Activated CD4-positive, alpha-beta T cell treated with anti-CD3 and anti-CD28 coated beads for 36 hours (primary cell): ENCODE measurements at regions of chr15 and their contacts with region 1.

Region 1: GRCh38 chr15:64247906-64248541 is 85.2 kb upstream of the PPIB start:
- DNase-seq: peak; percentile 34
- ATAC-seq: peak; percentile 55
- H3K4me3 Mint-ChIP-seq: no peak overlapping the region
- H3K27ac Mint-ChIP-seq: no peak overlapping the region
- H3K4me1 Mint-ChIP-seq: peaks cover 42% of the 10 kb centered on the region
- H3K27me3 Mint-ChIP-seq: no peaks in the 10 kb centered on the region

Region 2: DNA sequence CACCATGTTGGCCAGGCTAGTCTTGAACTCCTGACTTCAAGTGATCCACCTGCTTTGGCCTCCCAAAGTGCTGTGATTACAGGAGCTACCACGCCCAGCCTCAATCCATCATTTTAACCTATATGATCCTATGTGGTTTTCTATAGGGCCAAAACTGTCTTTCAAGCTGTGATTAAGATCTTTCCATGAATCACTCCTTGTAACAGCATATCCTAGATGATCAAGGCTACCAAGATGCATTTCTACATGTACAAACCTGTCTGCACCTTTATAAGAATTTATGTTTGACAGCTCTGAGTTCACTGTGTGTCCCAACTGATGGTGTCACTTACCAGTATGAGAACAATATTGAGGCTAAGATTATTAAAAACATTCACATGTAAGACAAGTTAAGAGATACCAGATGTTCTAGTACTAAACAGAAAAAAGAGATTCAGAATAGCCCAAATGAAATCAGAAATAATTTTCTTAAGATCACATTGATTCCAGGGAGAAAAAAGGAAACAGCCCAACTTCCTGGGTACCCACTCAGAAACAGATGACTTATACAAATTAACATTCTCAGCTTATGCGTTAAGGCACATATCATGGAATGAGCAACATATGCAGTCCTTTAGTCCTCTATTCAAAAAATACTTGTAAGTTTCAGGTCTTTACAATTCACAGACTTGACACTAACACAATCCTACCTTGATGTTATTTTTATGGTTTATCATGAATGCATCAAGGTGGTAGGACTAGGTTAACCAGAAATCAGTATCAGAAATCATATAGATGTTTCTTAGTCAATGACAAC is 60.4 kb before region 1 on chr15:
- CTCF ChIA-PET with region 1: no interaction called
- POLR2A ChIA-PET with region 1: interaction called, 3 read pairs
- intact Hi-C with region 1: loop called in 1 of 2 experiments (anchors 1 kb)
- DNase-seq: no peak
- ATAC-seq: peak; percentile 37
- H3K4me3 Mint-ChIP-seq: peak overlapping the region; percentile 39
- H3K27ac Mint-ChIP-seq: peak overlapping the region; percentile 80
- H3K4me1 Mint-ChIP-seq: peaks cover 13% of the 10 kb centered on the region
- H3K27me3 Mint-ChIP-seq: no peaks in the 10 kb centered on the region

Region 3: DNA sequence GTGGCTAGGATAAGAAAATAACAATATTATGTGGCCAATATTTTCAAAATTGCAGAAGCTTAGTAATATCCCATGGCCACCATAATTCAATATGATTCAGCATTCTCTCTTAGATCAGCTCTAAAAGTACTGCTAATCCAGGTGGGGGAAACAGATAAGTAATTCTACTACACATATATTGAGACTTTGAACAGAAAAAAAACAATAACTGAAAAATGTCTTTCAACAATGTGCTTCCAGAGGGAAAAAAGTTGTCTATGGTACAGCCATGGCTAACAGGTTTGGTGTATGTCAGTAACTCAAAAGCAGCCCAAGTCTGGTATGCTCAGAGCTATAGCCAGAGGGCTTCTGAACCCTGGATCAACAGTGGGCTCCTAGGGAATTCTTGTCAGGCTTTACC is 42.8 kb before region 1 on chr15:
- CTCF ChIA-PET with region 1: no interaction called
- POLR2A ChIA-PET with region 1: no interaction called
- intact Hi-C with region 1: no loop called
- DNase-seq: no peak
- ATAC-seq: no peak
- H3K4me3 Mint-ChIP-seq: no peak overlapping the region
- H3K27ac Mint-ChIP-seq: no peak overlapping the region
- H3K4me1 Mint-ChIP-seq: peaks cover 7% of the 10 kb centered on the region
- H3K27me3 Mint-ChIP-seq: no peaks in the 10 kb centered on the region

Region 4: GRCh38 chr15:64222573-64223366 is 25.3 kb before region 1 on chr15:
- CTCF ChIA-PET with region 1: no interaction called
- POLR2A ChIA-PET with region 1: no interaction called
- intact Hi-C with region 1: loop called (anchors 1 kb)
- DNase-seq: no peak
- ATAC-seq: peak; percentile 92
- H3K4me3 Mint-ChIP-seq: no peak overlapping the region
- H3K27ac Mint-ChIP-seq: no peak overlapping the region
- H3K4me1 Mint-ChIP-seq: peaks cover 22% of the 10 kb centered on the region
- H3K27me3 Mint-ChIP-seq: no peaks in the 10 kb centered on the region

Region 5: DNA sequence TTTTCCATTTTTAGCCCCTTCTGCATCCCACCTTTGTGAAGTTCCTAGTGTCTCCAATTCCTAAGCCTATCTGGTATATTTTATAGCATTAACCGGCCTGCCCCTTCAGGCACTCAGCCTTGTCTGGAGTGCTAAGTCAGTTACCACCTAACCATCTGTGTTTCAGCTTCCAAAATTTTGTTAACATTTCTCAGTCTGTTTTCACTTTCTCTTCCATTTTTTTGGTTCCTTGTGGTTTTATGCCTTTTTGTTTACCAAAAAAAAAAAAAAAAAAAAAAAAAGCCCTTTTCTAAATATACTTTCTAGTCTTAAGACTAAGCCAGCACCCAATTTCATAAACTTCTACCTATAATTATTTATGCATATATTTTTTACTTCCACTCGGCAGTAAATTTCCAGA is 15.5 kb after region 1 on chr15:
- CTCF ChIA-PET with region 1: no interaction called
- POLR2A ChIA-PET with region 1: no interaction called
- intact Hi-C with region 1: loop called (anchors 1 to 2 kb)
- DNase-seq: no peak
- ATAC-seq: no peak
- H3K4me3 Mint-ChIP-seq: no peak overlapping the region
- H3K27ac Mint-ChIP-seq: no peak overlapping the region
- H3K4me1 Mint-ChIP-seq: peaks cover 41% of the 10 kb centered on the region
- H3K27me3 Mint-ChIP-seq: no peaks in the 10 kb centered on the region

Region 6: DNA sequence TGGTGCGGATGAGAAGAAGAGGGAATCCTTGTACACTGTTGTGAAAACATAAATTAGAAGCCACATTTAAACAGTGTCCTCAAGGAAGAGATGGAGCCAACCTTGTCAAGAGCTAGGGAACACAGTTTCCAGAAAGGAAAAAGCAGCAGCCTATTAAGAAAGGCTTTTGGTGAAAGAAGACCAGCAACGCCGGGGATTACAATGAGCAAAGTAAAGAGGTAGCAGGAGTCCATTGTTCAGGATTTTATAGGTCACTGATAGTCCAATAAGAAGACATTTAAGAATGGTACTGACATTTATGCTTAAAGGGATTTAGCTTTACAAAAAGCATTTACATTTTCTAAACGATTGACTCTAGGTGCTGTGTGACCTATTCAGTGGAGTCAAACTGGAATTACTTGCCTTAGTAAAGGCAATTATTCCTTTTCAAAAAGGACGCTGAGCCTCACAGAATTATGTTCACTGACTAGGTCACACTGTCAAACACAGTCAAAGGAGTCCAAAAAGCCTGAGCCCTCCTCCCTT is 67.2 kb after region 1 on chr15:
- CTCF ChIA-PET with region 1: no interaction called
- POLR2A ChIA-PET with region 1: no interaction called
- intact Hi-C with region 1: no loop called
- DNase-seq: no peak
- ATAC-seq: no peak
- H3K4me3 Mint-ChIP-seq: no peak overlapping the region
- H3K27ac Mint-ChIP-seq: no peak overlapping the region
- H3K4me1 Mint-ChIP-seq: peaks cover 5% of the 10 kb centered on the region
- H3K27me3 Mint-ChIP-seq: no peaks in the 10 kb centered on the region

Region 7: GRCh38 chr15:64702816-64703646 is 455.0 kb after region 1 on chr15:
- CTCF ChIA-PET with region 1: no interaction called
- POLR2A ChIA-PET with region 1: no interaction called
- intact Hi-C with region 1: loop called in 1 of 2 experiments (anchors 2 kb)
- DNase-seq: peak; percentile 98
- ATAC-seq: peak; percentile 91
- H3K4me3 Mint-ChIP-seq: peak overlapping the region; percentile 72
- H3K27ac Mint-ChIP-seq: peak overlapping the region; percentile 86
- H3K4me1 Mint-ChIP-seq: peaks cover 52% of the 10 kb centered on the region
- H3K27me3 Mint-ChIP-seq: no peaks in the 10 kb centered on the region